PC-9 (cell line): ENCODE measurements at regions of chr5 and their contacts with region 1.

Region 1: DNA sequence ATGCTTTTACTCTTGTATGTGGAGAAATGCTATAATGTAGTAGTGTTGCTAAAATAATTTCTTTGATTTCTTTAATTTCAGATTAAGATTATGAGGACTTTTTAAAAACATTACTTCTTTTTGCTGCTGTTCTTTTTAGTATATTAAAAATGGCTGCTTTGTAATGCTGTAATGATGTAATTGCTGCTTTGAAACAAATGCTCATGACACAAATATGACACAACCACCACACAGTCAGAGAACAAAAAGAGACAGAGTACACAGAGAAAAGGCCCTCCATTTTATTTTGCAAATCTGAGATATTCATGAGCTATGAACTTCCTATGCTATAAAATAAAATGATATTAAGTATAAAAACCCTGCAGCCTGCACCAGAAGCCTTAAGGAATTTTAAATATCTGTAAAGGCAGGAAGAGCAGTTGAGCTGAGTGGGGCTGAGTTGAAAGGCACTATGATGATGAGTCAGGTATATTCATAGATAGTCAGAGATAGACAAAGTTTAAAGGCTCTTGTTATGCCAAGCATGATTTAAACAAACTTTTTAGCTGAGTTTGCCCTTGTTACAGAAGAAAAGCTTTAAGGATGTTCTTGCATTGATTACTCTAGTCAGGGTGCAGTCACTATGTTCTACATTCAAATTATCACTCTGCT is 5.1 kb upstream of the POU5F2 start:
- DNase-seq: no peak
- H3K4me3 ChIP-seq: no peak overlapping the region
- H3K27ac ChIP-seq: no peak overlapping the region
- H3K4me1 ChIP-seq: no peaks in the 10 kb centered on the region
- H3K27me3 ChIP-seq: no peaks in the 10 kb centered on the region
- CTCF ChIP-seq: no peak

Region 2: GRCh38 chr5:93819666-93820065 is 73.1 kb after region 1 on chr5:
- CTCF ChIA-PET with region 1: no interaction called
- POLR2A ChIA-PET with region 1: interaction called, 12 read pairs
- intact Hi-C with region 1: no loop called
- DNase-seq: no peak
- H3K4me3 ChIP-seq: no peak overlapping the region
- H3K27ac ChIP-seq: no peak overlapping the region
- H3K4me1 ChIP-seq: no peaks in the 10 kb centered on the region
- H3K27me3 ChIP-seq: no peaks in the 10 kb centered on the region
- CTCF ChIP-seq: no peak

Region 3: GRCh38 chr5:93924613-93925012 is 178.1 kb after region 1 on chr5:
- CTCF ChIA-PET with region 1: no interaction called
- POLR2A ChIA-PET with region 1: no interaction called
- intact Hi-C with region 1: no loop called
- DNase-seq: no peak
- H3K4me3 ChIP-seq: no peak overlapping the region
- H3K27ac ChIP-seq: no peak overlapping the region
- H3K4me1 ChIP-seq: peaks cover 9% of the 10 kb centered on the region; the same call in 1 of the 2 replicates
- H3K27me3 ChIP-seq: no peaks in the 10 kb centered on the region
- CTCF ChIP-seq: no peak